ENCODE measurements at regions of chr13 and their contacts with region 1.

Region 1: GRCh38 chr13:51452361-51453206 is at the start of gene INTS6:
- DNase-seq: peak; percentile 99
- ATAC-seq: peak; percentile 93 to 96
- H3K4me3 ChIP-seq: peak within 1 kb of the TSS; percentile 94
- H3K27ac ChIP-seq: peak within 1 kb of the TSS; percentile 98
- H3K4me1 ChIP-seq: peaks cover 31% of the 10 kb centered on the region
- H3K27me3 ChIP-seq: no peaks in the 10 kb centered on the region
- CTCF ChIP-seq: no peak
- total RNA-seq, gene INTS6: 29.5 TPM

Region 2: GRCh38 chr13:51534041-51534817 is 81.6 kb after region 1 on chr13:
- intact Hi-C with region 1: no loop called
- DNase-seq: peak; percentile 80
- ATAC-seq: peak; percentile 79 to 88
- H3K4me3 ChIP-seq: no peak overlapping the region
- H3K27ac ChIP-seq: peak overlapping the region; percentile 20
- H3K4me1 ChIP-seq: peaks cover 8% of the 10 kb centered on the region
- H3K27me3 ChIP-seq: no peaks in the 10 kb centered on the region
- CTCF ChIP-seq: no peak

Region 3: GRCh38 chr13:51583875-51584730 is 131.5 kb after region 1 on chr13 and contains the start of gene WDFY2:
- intact Hi-C with region 1: loop called (anchors 10 kb)
- DNase-seq: peak; percentile 100
- ATAC-seq: peak; percentile 96 to 97
- H3K4me3 ChIP-seq: peak within 1 kb of the TSS; percentile 92
- H3K27ac ChIP-seq: peak within 1 kb of the TSS; percentile 89
- H3K4me1 ChIP-seq: peaks cover 25% of the 10 kb centered on the region
- H3K27me3 ChIP-seq: no peaks in the 10 kb centered on the region
- CTCF ChIP-seq: no peak
- total RNA-seq, gene WDFY2: 16.6 TPM

Measured in lower lobe of right lung (tissue), 2 donors.